ENCODE measurements at regions of chr6 and their contacts with region 1.

Region 1: DNA sequence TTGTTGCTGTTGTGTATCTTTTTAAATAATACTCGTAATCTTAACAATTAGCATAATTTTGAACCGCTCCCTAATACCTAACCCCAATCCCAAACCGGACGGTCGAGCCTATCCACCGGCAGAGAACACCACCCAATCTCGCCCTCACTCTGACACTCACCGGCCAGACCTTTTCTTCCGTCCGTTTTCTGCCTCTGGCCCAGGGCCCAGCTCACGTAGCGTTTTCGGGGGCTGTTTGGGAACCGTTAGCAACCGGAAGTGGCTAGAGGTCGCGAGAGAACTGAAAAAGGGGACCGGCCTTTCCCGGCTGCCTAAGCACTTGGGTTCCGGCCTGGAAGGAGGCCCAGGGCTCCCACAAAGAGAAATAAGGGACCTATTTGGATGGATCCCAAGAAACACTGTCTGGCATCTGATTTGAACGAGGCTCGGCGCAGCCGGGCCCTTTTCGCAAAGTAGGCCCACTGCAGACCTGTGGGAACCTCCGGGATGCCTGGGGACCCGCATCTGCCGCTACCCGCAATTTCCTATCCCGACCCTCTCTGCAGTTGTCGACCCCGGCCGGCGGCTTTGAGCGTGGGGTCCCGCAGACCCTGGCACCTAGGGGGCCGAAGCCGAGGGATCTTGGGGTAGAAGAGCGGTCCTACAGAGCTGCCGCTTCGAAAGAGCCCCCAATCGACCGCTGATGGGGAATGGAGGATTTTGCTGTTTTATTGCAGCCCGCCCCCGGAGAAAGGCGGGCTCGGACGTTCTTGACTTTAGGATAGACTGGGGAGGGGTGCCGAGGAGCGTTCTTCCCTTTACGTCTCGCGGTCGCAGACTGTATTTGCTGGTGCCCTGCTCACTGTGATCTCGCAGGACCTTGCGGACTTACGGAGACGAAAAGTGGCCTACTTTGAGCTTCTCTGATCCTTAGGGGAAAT is 4.8 kb upstream of the ZKSCAN8 start:
- DNase-seq: peak; percentile 88 to 94
- ATAC-seq: peak; percentile 92 to 96 (median 93)
- H3K4me3 ChIP-seq: peak overlapping the region; percentile 69 to 93 (median 78)
- H3K27ac ChIP-seq: peak overlapping the region; percentile 81 to 97 (median 94)
- H3K4me1 ChIP-seq: peaks cover 0 to 58% (median 24%) of the 10 kb centered on the region in 9 donors
- H3K27me3 ChIP-seq: no peaks in the 10 kb centered on the region
- CTCF ChIP-seq: no peak

Region 2: DNA sequence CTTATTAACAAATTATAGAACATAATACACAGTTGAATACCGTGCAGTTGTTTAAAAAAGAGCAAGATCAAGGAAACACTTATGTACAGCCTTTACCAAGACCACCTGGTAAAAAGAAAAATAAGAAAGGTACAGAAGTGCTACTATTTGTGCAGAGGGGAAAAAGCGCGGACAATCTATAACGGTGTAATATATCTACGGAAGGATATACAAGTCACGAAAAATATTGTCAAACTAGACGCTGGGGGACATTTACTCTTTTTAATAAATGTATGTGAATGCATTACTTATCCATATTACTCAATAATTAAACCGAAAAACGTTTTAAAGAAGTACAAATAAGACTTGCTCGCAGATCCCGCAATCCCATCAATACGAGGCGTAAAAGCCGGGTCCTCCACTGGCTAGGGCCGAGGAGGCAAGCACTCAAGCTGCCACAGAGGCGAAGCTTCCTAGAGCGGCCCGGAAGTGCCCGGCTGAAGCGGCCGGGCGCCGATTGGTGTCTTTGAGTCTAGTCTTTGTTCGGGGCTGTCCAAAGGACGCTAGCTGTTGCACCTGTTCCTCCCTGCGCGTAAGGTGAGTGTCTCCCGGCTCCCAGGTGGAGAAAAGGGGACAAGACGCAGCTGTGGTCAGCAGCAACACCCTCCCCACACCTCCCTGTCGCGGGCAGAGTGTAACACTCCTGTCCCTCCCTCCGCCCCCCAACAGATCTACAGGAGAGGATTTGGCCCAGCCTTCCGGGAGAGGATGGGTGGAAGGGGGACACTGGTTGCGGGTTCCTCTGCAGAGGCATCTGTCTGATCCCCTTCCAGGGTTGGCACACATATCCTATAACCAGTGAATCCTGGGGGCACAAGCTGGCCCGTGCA is 12.5 kb before region 1 on chr6 and contains the start of gene ZSCAN16:
- intact Hi-C with region 1: loop called in 1 of 10 experiments (anchors 1 kb)
- DNase-seq: peak; percentile 84 to 87
- ATAC-seq: peak; percentile 94 to 100 (median 99)
- H3K4me3 ChIP-seq: peak within 1 kb of the TSS; percentile 50 to 75 (median 68)
- H3K27ac ChIP-seq: peak within 1 kb of the TSS in 9 of 10 donors; percentile 49 to 88 (median 62)
- H3K4me1 ChIP-seq: peaks cover 0 to 38% (median 20%) of the 10 kb centered on the region in 9 donors
- H3K27me3 ChIP-seq: no peaks in the 10 kb centered on the region
- CTCF ChIP-seq: no peak
- total RNA-seq, gene ZSCAN16: 1.4 to 3.3 (median 1.8) TPM

Region 3: GRCh38 chr6:28225056-28225834 is 88.4 kb after region 1 on chr6 and contains the start of gene ZSCAN9:
- intact Hi-C with region 1: loop called in 7 of 10 experiments (anchors 2 to 10 kb)
- DNase-seq: peak; percentile 84 to 91
- ATAC-seq: peak; percentile 97 to 99 (median 98)
- H3K4me3 ChIP-seq: peak within 1 kb of the TSS; percentile 41 to 87 (median 78)
- H3K27ac ChIP-seq: peak within 1 kb of the TSS in 9 of 10 donors; percentile 67 to 88 (median 81)
- H3K4me1 ChIP-seq: peaks cover 3 to 29% (median 14%) of the 10 kb centered on the region in 9 donors
- H3K27me3 ChIP-seq: peaks cover 0 to 31% (median 21%) of the 10 kb centered on the region in 7 donors
- CTCF ChIP-seq: no peak
- total RNA-seq, gene ZSCAN9: 6.8 to 11.2 (median 8.8) TPM

Region 4: GRCh38 chr6:28266962-28267694 is 130.3 kb after region 1 on chr6 and contains the start of gene ZSCAN26:
- intact Hi-C with region 1: loop called in 1 of 10 experiments (anchors 5 kb)
- DNase-seq: peak; percentile 87 to 91
- ATAC-seq: peak; percentile 95 to 99 (median 98)
- H3K4me3 ChIP-seq: peak within 1 kb of the TSS; percentile 48 to 90 (median 80)
- H3K27ac ChIP-seq: peak within 1 kb of the TSS; percentile 67 to 97 (median 84)
- H3K4me1 ChIP-seq: peaks cover 0 to 37% (median 18%) of the 10 kb centered on the region in 9 donors
- H3K27me3 ChIP-seq: no peaks in the 10 kb centered on the region
- CTCF ChIP-seq: no peak
- total RNA-seq, gene ZSCAN26: 8.9 to 17.8 (median 12.8) TPM